ENCODE measurements at regions of chr5 and their contacts with region 1.

Region 1: DNA sequence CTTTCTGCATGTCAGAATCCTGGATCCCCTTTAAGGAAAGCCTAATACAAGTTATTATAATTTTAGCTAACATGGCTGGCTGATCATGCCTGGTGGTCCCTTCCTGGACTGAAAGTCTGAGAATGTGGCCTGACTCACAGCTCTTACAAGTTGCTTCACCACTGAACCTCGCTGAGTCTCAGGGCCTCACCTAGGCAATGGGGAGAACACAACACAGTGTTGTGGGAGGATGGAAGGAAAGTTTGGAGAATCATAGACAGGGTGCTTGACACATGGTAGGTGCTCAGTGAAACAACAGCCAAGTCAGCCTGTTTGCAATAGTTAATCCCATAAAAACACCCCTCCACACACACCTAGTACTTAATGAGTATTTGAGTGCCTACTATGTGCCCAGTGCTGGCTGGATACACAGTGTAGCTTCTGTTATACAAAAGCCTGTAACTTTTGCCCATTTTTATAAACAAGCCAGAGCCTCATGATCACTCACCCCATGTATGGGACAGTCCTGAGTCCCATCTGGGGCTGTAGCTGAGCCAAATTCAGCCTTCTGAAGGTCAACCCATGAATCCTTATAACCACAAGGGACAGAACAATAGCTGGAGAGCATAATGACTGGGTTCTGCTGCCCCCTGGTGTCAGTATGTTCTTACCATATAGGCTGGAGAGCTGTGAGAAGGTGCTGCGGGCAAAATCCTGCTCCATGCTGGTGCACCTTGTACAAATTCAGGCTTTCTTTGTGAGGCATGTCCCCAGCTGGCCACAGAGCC is 3.9 kb downstream of the ACSL6 start:
- DNase-seq: peak; percentile 70 to 86 (median 72)
- ATAC-seq: peak; percentile 51 to 83 (median 78)
- H3K4me3 ChIP-seq: no peak overlapping the region
- H3K27ac ChIP-seq: no peak overlapping the region
- H3K4me1 ChIP-seq: peaks cover 0 to 48% (median 15%) of the 10 kb centered on the region in 12 donors
- H3K27me3 ChIP-seq: peaks cover 0 to 23% (median 6%) of the 10 kb centered on the region in 9 donors
- CTCF ChIP-seq: peak; percentile 62 to 83 (median 72)
- POLR2A ChIP-seq: no peak

Region 2: DNA sequence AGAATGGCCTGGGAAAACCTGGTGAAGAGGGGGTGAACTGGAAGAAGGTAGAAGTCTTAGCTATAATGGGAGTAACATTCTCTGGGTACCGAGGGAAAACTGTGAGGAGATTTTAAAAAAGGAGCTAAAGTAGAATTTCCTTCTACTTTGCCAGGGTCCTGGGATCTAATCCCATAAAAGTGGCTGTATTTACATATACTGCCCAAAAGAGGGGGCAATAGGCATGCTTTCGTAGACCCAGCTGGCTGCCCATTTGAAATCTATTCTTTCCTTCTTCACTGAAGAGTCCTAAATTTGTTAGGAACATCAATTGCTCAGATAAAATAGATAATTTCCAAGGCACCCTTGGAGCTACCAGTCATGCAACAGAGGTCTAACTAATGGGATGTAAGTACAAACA is 584.5 kb before region 1 on chr5:
- intact Hi-C with region 1: loop called in 5 of 10 experiments (anchors 5 to 10 kb)
- DNase-seq: no peak
- ATAC-seq: peak in 1 of 4 donors; percentile 33
- H3K4me3 ChIP-seq: no peak overlapping the region
- H3K27ac ChIP-seq: no peak overlapping the region
- H3K4me1 ChIP-seq: no peaks in the 10 kb centered on the region
- H3K27me3 ChIP-seq: no peaks in the 10 kb centered on the region
- CTCF ChIP-seq: peak; percentile 7 to 55 (median 38)
- POLR2A ChIP-seq: no peak

Region 3: DNA sequence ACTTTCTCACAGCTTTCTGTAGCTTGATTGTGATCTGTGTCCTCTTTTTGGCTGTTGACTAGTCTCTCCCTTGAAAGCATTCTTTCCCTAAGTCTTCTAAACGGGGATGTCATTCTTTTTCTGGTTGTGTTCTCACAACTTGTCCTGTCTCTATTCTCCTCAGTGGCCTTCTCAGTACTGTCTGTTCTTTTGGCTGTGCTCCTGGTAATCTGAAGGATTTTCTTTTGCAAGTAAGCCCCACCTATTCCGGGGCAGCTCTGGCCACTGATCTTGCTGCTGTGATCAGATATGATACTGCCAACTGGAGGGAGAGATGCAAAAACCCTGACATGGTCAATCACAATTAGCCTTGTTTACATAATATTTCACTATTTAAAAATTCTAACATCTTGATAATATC is 571.5 kb before region 1 on chr5:
- intact Hi-C with region 1: loop called in 1 of 10 experiments (anchors 10 kb)
- DNase-seq: no peak
- ATAC-seq: peak in 1 of 4 donors; percentile 36
- H3K4me3 ChIP-seq: no peak overlapping the region
- H3K27ac ChIP-seq: no peak overlapping the region
- H3K4me1 ChIP-seq: peaks cover 0 to 4% (median 0%) of the 10 kb centered on the region in 12 donors
- H3K27me3 ChIP-seq: no peaks in the 10 kb centered on the region
- CTCF ChIP-seq: no peak
- POLR2A ChIP-seq: no peak

Region 4: GRCh38 chr5:131589510-131590348 is 417.9 kb before region 1 on chr5:
- intact Hi-C with region 1: loop called (anchors 1 to 5 kb)
- DNase-seq: peak in 1 of 5 donors; percentile 25
- ATAC-seq: peak in 3 of 4 donors; percentile 63 to 68 (median 68)
- H3K4me3 ChIP-seq: no peak overlapping the region
- H3K27ac ChIP-seq: no peak overlapping the region
- H3K4me1 ChIP-seq: peaks cover 0 to 21% (median 17%) of the 10 kb centered on the region in 12 donors
- H3K27me3 ChIP-seq: no peaks in the 10 kb centered on the region
- CTCF ChIP-seq: peak; percentile 72 to 95 (median 85)
- POLR2A ChIP-seq: no peak

Region 5: GRCh38 chr5:131810510-131811249 is 196.9 kb before region 1 on chr5:
- intact Hi-C with region 1: loop called in 9 of 10 experiments (anchors 2 to 5 kb)
- DNase-seq: peak in 2 of 5 donors; percentile 17 to 29
- ATAC-seq: peak; percentile 76 to 88 (median 88)
- H3K4me3 ChIP-seq: peak overlapping the region in 1 of 12 donors; percentile 6
- H3K27ac ChIP-seq: peak overlapping the region in 9 of 12 donors; percentile 38 to 84 (median 57)
- H3K4me1 ChIP-seq: peaks cover 0 to 21% (median 9%) of the 10 kb centered on the region in 12 donors
- H3K27me3 ChIP-seq: no peaks in the 10 kb centered on the region
- CTCF ChIP-seq: peak in 10 of 12 donors; percentile 12 to 54 (median 38)
- POLR2A ChIP-seq: no peak

Region 6: DNA sequence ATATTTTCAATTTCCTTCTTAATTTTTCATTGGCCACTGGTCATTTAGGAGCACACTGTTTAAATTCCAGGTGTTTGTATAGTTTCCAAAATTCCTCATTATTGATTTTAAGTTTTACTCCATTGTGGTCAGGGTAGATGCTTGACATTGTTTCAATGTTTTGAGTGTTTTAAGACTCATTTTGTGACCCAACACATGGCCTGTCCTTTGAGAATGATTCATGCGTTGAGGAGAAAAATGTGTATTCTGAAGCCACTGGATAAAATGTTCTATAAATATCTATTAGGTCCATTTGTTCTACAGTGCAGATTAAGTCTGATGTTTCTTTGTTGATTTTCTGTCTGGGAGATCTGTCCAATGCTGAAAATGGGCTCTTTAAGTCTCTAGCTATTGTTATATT is 186.4 kb before region 1 on chr5:
- intact Hi-C with region 1: loop called in 1 of 10 experiments (anchors 2 kb)
- DNase-seq: no peak
- ATAC-seq: no peak
- H3K4me3 ChIP-seq: no peak overlapping the region
- H3K27ac ChIP-seq: no peak overlapping the region
- H3K4me1 ChIP-seq: no peaks in the 10 kb centered on the region
- H3K27me3 ChIP-seq: peaks cover 0 to 4% (median 0%) of the 10 kb centered on the region in 9 donors
- CTCF ChIP-seq: no peak
- POLR2A ChIP-seq: no peak

Region 7: GRCh38 chr5:132915681-132916080 is 908.1 kb after region 1 on chr5:
- intact Hi-C with region 1: no loop called
- DNase-seq: no peak
- ATAC-seq: no peak
- H3K4me3 ChIP-seq: no peak overlapping the region
- H3K27ac ChIP-seq: no peak overlapping the region
- H3K4me1 ChIP-seq: peaks cover 0 to 12% (median 0%) of the 10 kb centered on the region in 12 donors
- H3K27me3 ChIP-seq: no peaks in the 10 kb centered on the region
- CTCF ChIP-seq: no peak
- POLR2A ChIP-seq: no peak

Measured in heart left ventricle (tissue), 16 donors.